Activated B cell treated with CpG ODN at 0.5 μM for 24 hours (primary cell): ENCODE measurements at regions of chr3 and their contacts with region 1.

Region 1: DNA sequence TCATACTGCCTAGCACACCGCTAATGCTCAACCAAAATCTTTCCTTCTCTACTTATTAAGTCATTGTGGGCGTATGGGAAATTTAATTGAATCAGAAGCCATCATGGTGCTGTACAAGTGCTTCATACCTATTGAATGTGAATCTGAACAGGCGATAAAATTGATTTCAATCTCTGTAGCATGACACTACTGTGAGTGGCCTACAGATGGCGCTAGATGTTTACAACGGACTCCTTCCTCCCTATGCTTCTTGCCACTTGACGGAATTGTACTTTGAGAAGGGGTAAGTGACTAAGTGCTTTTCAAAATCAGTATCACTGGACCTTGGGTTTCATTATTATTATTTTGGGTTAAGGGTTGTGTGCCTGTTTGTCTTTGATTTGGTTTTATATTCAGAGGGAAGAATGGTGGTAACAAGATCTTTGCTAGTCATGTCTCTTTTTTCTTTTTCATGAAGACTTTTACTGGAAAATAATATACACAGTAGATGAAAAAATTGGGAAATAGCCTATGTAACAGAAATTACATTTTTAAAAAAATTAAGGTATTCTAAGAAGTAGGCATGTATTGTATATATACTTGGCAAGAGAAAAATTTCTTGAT is 35.4 kb downstream of the ACP3 start:
- DNase-seq: no peak
- ATAC-seq: peak; percentile 84
- H3K4me3 Mint-ChIP-seq: no peak overlapping the region
- H3K27ac Mint-ChIP-seq: no peak overlapping the region
- H3K4me1 Mint-ChIP-seq: no peaks in the 10 kb centered on the region
- H3K27me3 Mint-ChIP-seq: no peaks in the 10 kb centered on the region
- CTCF ChIP-seq: no peak

Region 2: GRCh38 chr3:131669590-131669989 is 683.1 kb before region 1 on chr3:
- CTCF ChIA-PET with region 1: no interaction called
- POLR2A ChIA-PET with region 1: no interaction called
- intact Hi-C with region 1: no loop called
- DNase-seq: no peak
- ATAC-seq: no peak
- H3K4me3 Mint-ChIP-seq: no peak overlapping the region
- H3K27ac Mint-ChIP-seq: no peak overlapping the region
- H3K4me1 Mint-ChIP-seq: no peaks in the 10 kb centered on the region
- H3K27me3 Mint-ChIP-seq: no peaks in the 10 kb centered on the region
- CTCF ChIP-seq: no peak

Region 3: GRCh38 chr3:131794766-131795388 is 557.8 kb before region 1 on chr3:
- CTCF ChIA-PET with region 1: no interaction called
- POLR2A ChIA-PET with region 1: no interaction called
- intact Hi-C with region 1: no loop called
- DNase-seq: no peak
- ATAC-seq: peak; percentile 66
- H3K4me3 Mint-ChIP-seq: no peak overlapping the region
- H3K27ac Mint-ChIP-seq: no peak overlapping the region
- H3K4me1 Mint-ChIP-seq: peaks cover 15% of the 10 kb centered on the region
- H3K27me3 Mint-ChIP-seq: peaks cover 14% of the 10 kb centered on the region
- CTCF ChIP-seq: no peak

Region 4: GRCh38 chr3:132368962-132369361 is 16.3 kb after region 1 on chr3:
- CTCF ChIA-PET with region 1: no interaction called
- POLR2A ChIA-PET with region 1: no interaction called
- intact Hi-C with region 1: no loop called
- DNase-seq: no peak
- ATAC-seq: no peak
- H3K4me3 Mint-ChIP-seq: no peak overlapping the region
- H3K27ac Mint-ChIP-seq: no peak overlapping the region
- H3K4me1 Mint-ChIP-seq: no peaks in the 10 kb centered on the region
- H3K27me3 Mint-ChIP-seq: no peaks in the 10 kb centered on the region
- CTCF ChIP-seq: no peak

Region 5: GRCh38 chr3:132445817-132446216 is 93.2 kb after region 1 on chr3:
- CTCF ChIA-PET with region 1: no interaction called
- POLR2A ChIA-PET with region 1: no interaction called
- intact Hi-C with region 1: loop called (anchors 5 kb)
- DNase-seq: no peak
- ATAC-seq: no peak
- H3K4me3 Mint-ChIP-seq: no peak overlapping the region
- H3K27ac Mint-ChIP-seq: no peak overlapping the region
- H3K4me1 Mint-ChIP-seq: peaks cover 10% of the 10 kb centered on the region
- H3K27me3 Mint-ChIP-seq: no peaks in the 10 kb centered on the region
- CTCF ChIP-seq: no peak

Region 6: DNA sequence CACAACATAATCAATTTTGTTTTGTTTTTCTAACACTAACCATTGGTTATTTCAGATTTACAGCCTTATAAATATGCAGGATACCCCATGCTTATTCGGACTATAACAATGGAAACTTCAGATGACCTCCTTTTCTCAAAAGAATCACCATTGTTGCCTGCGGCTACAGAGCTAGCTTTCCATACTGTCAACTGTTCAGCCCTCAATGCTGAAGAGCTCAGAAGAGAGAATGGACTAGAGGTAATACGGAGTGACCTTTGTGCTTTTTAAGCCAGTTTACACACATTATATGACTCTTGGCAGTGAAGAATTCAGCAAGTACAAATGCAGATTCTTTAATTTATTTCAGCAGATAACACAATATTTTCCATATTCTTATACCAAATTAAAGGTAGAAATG is 146.4 kb after region 1 on chr3:
- CTCF ChIA-PET with region 1: no interaction called
- POLR2A ChIA-PET with region 1: no interaction called
- intact Hi-C with region 1: loop called (anchors 10 kb)
- DNase-seq: no peak
- ATAC-seq: no peak
- H3K4me3 Mint-ChIP-seq: no peak overlapping the region
- H3K27ac Mint-ChIP-seq: no peak overlapping the region
- H3K4me1 Mint-ChIP-seq: no peaks in the 10 kb centered on the region
- H3K27me3 Mint-ChIP-seq: no peaks in the 10 kb centered on the region
- CTCF ChIP-seq: no peak

Region 7: DNA sequence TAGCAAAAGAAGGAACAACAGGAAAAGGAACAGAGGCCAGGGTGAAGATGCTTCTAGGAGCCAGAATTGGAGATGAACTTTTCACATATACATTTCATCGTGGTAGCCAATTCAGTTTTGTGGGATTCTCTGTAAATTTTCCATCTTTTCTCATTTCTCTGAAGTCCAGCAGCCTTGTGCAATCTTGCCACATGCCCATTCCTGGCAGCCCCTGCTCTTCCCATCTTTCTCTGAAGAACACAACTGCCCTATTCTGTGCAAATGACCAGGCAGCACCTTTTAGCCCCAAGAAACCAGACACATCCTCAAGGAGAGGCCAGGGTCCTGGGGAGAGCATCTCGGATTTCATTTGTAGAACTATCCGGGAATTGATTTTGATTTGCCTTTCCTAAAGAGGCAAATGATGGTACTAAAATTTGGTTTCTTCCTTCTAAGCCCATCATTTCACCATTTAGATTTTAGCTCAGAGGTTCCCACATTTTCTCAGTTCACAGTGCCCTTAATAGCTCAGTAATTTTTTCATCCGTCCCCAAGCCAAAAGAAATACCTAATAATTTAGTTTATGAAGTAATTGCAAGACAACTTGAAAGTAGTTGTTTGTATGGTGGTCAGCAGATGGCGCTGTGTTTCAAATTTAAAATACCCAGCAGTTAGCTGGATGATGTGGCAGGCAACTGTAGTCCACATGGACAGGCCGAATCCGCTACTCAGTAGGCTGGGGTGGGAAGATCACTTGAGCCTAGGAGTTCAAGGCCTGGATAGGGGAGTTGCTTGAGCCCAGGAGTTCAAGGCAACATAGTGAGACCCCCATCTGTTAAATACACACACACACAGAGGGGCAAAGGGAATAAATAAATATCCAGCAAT is 183.2 kb after region 1 on chr3:
- CTCF ChIA-PET with region 1: no interaction called
- POLR2A ChIA-PET with region 1: no interaction called
- intact Hi-C with region 1: loop called (anchors 1 kb)
- DNase-seq: peak; percentile 15
- ATAC-seq: no peak
- H3K4me3 Mint-ChIP-seq: no peak overlapping the region
- H3K27ac Mint-ChIP-seq: no peak overlapping the region
- H3K4me1 Mint-ChIP-seq: no peaks in the 10 kb centered on the region
- H3K27me3 Mint-ChIP-seq: no peaks in the 10 kb centered on the region
- CTCF ChIP-seq: peak; percentile 78

Region 8: GRCh38 chr3:132641837-132642538 is 289.3 kb after region 1 on chr3:
- CTCF ChIA-PET with region 1: interaction called, 4 read pairs
- POLR2A ChIA-PET with region 1: no interaction called
- intact Hi-C with region 1: loop called (anchors 1 kb)
- DNase-seq: no peak
- ATAC-seq: no peak
- H3K4me3 Mint-ChIP-seq: no peak overlapping the region
- H3K27ac Mint-ChIP-seq: no peak overlapping the region
- H3K4me1 Mint-ChIP-seq: peaks cover 3% of the 10 kb centered on the region
- H3K27me3 Mint-ChIP-seq: no peaks in the 10 kb centered on the region
- CTCF ChIP-seq: peak; percentile 97